CD4-positive, alpha-beta memory T cell (primary cell): ENCODE measurements at regions of chr1 and their contacts with region 1.

Region 1: GRCh38 chr1:39196244-39197215 is 8.0 kb upstream of the MACF1 start:
- DNase-seq: peak; percentile 77 to 89 (median 85)
- H3K4me3 ChIP-seq: peak overlapping the region; percentile 17 to 28
- H3K4me3 Mint-ChIP-seq: peak overlapping the region; percentile 50 to 88 (median 70)
- H3K27ac ChIP-seq: peak overlapping the region; percentile 55
- H3K27ac Mint-ChIP-seq: peak overlapping the region; percentile 91 to 96 (median 93)
- H3K4me1 ChIP-seq: peaks cover 85% of the 10 kb centered on the region
- H3K4me1 Mint-ChIP-seq: peaks cover 60 to 90% (median 73%) of the 10 kb centered on the region in 4 donors
- H3K27me3 ChIP-seq: no peaks in the 10 kb centered on the region
- H3K27me3 Mint-ChIP-seq: no peaks in the 10 kb centered on the region

Region 2: GRCh38 chr1:38990738-38991639 is 205.5 kb before region 1 on chr1 and contains the start of gene AKIRIN1:
- CTCF ChIA-PET with region 1: no interaction called
- POLR2A ChIA-PET with region 1: no interaction called
- intact Hi-C with region 1: loop called (anchors 10 kb)
- DNase-seq: peak; percentile 87 to 95 (median 89)
- H3K4me3 ChIP-seq: peak within 1 kb of the TSS; percentile 52 to 67
- H3K4me3 Mint-ChIP-seq: peak within 1 kb of the TSS; percentile 88 to 94 (median 92)
- H3K27ac ChIP-seq: peak within 1 kb of the TSS; percentile 93
- H3K27ac Mint-ChIP-seq: peak within 1 kb of the TSS; percentile 87 to 93 (median 91)
- H3K4me1 ChIP-seq: peaks cover 47% of the 10 kb centered on the region
- H3K4me1 Mint-ChIP-seq: peaks cover 21 to 52% (median 37%) of the 10 kb centered on the region in 4 donors
- H3K27me3 ChIP-seq: no peaks in the 10 kb centered on the region
- H3K27me3 Mint-ChIP-seq: no peaks in the 10 kb centered on the region
- total RNA-seq, gene AKIRIN1: 79.6 to 84.9 TPM

Region 3: DNA sequence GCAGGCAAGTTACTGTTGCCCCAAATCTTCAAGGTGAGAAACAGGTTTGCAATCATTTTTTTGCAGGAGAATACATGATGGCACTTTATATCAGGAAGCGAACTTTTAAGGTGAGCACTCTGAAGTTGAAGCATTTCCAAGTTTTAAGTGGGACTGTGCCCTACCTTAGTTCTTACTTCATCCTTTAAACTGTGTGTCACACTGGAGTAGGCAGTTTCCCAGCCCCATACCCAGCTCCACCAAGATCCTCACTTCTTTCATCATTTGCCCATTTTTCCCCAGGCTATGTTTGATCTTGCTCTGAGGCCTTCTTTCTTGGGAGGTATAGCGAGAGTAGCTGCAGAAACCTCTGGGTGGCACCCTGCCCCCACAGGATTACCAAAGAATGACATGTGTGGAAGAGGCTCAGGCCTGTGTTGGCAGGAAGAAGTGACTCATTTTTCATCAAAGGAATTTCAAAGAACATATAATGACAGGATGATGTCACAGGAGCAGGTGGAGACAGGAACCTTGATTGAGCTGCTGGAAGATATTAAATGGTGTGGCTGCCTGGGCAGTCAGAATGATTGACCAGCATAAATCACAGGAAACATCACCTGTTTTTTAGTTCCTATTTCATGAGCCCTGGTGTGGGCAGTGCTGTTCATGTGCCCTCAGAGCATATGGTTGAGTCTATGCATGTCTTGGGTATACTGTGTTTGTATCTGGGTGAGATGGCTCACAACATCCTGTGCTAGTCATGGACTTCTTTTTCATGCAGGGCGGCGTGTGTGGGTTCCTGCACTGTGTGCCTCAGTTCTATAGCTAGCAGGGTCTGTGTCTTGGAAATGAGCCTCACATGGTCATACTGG is 12.8 kb before region 1 on chr1:
- CTCF ChIA-PET with region 1: interaction called, 91 read pairs
- POLR2A ChIA-PET with region 1: interaction called, 45 read pairs
- intact Hi-C with region 1: loop called (anchors 1 kb)
- DNase-seq: peak; percentile 83 to 95 (median 87)
- H3K4me3 ChIP-seq: no peak overlapping the region
- H3K4me3 Mint-ChIP-seq: peak overlapping the region in 5 of 8 donors; percentile 8 to 53 (median 35)
- H3K27ac ChIP-seq: peak overlapping the region; percentile 70
- H3K27ac Mint-ChIP-seq: peak overlapping the region; percentile 90 to 98 (median 96)
- H3K4me1 ChIP-seq: peaks cover 34% of the 10 kb centered on the region
- H3K4me1 Mint-ChIP-seq: peaks cover 18 to 44% (median 30%) of the 10 kb centered on the region in 4 donors
- H3K27me3 ChIP-seq: no peaks in the 10 kb centered on the region
- H3K27me3 Mint-ChIP-seq: no peaks in the 10 kb centered on the region

Region 4: GRCh38 chr1:39220891-39221870 is 24.7 kb after region 1 on chr1:
- CTCF ChIA-PET with region 1: interaction called, 186 read pairs
- POLR2A ChIA-PET with region 1: interaction called, 103 read pairs
- intact Hi-C with region 1: no loop called
- DNase-seq: no peak
- H3K4me3 ChIP-seq: no peak overlapping the region
- H3K4me3 Mint-ChIP-seq: peak overlapping the region; percentile 2 to 87 (median 56)
- H3K27ac ChIP-seq: no peak overlapping the region
- H3K27ac Mint-ChIP-seq: peak overlapping the region; percentile 19 to 94 (median 83)
- H3K4me1 ChIP-seq: peaks cover 84% of the 10 kb centered on the region
- H3K4me1 Mint-ChIP-seq: peaks cover 54 to 86% (median 71%) of the 10 kb centered on the region in 4 donors
- H3K27me3 ChIP-seq: no peaks in the 10 kb centered on the region
- H3K27me3 Mint-ChIP-seq: no peaks in the 10 kb centered on the region

Region 5: DNA sequence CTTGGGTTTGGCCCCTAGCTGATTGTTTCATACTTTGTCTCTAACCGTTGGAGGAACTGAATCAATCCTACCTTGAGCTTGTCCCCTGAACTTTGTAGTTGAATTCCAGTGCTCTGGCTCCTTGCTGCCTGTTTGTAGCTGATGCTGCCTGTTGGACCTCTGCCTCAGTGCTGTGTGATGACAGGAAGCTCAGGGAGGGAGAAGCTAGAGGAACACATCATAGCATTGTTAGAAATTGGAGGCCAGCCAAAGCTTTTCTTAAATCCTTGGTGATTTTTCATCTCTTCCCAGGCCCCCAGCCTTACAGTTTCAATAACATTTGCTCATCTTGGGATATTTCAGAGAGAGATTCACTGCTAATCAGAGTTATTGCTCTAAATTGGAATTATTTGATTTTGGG is 41.9 kb after region 1 on chr1:
- CTCF ChIA-PET with region 1: interaction called, 90 read pairs
- POLR2A ChIA-PET with region 1: interaction called, 8 read pairs
- intact Hi-C with region 1: no loop called
- DNase-seq: no peak
- H3K4me3 ChIP-seq: no peak overlapping the region
- H3K4me3 Mint-ChIP-seq: peak overlapping the region in 2 of 8 donors; percentile 12 to 59
- H3K27ac ChIP-seq: peak overlapping the region; percentile 21
- H3K27ac Mint-ChIP-seq: peak overlapping the region; percentile 48 to 89 (median 80)
- H3K4me1 ChIP-seq: peaks cover 34% of the 10 kb centered on the region
- H3K4me1 Mint-ChIP-seq: peaks cover 34 to 70% (median 50%) of the 10 kb centered on the region in 4 donors
- H3K27me3 ChIP-seq: no peaks in the 10 kb centered on the region
- H3K27me3 Mint-ChIP-seq: no peaks in the 10 kb centered on the region

Region 6: GRCh38 chr1:39258146-39258924 is 61.8 kb after region 1 on chr1:
- CTCF ChIA-PET with region 1: interaction called, 820 read pairs
- POLR2A ChIA-PET with region 1: interaction called, 146 read pairs
- intact Hi-C with region 1: loop called (anchors 1 kb)
- DNase-seq: peak; percentile 54 to 71 (median 61)
- H3K4me3 ChIP-seq: no peak overlapping the region
- H3K4me3 Mint-ChIP-seq: peak overlapping the region in 1 of 8 donors; percentile 22
- H3K27ac ChIP-seq: peak overlapping the region; percentile 27
- H3K27ac Mint-ChIP-seq: peak overlapping the region; percentile 41 to 88 (median 81)
- H3K4me1 ChIP-seq: peaks cover 36% of the 10 kb centered on the region
- H3K4me1 Mint-ChIP-seq: peaks cover 20 to 42% (median 30%) of the 10 kb centered on the region in 4 donors
- H3K27me3 ChIP-seq: no peaks in the 10 kb centered on the region
- H3K27me3 Mint-ChIP-seq: no peaks in the 10 kb centered on the region

Region 7: GRCh38 chr1:39408641-39409054 is 212.1 kb after region 1 on chr1:
- CTCF ChIA-PET with region 1: interaction called, 17 read pairs
- POLR2A ChIA-PET with region 1: interaction called, 3 read pairs
- intact Hi-C with region 1: no loop called
- DNase-seq: peak; percentile 73 to 90 (median 77)
- H3K4me3 ChIP-seq: peak overlapping the region in 1 of 2 donors; percentile 59
- H3K4me3 Mint-ChIP-seq: peak overlapping the region in 7 of 8 donors; percentile 54 to 93 (median 92)
- H3K27ac ChIP-seq: peak overlapping the region; percentile 58
- H3K27ac Mint-ChIP-seq: peak overlapping the region in 1 of 7 donors; percentile 66
- H3K4me1 ChIP-seq: peaks cover 63% of the 10 kb centered on the region
- H3K4me1 Mint-ChIP-seq: peaks cover 46 to 72% (median 60%) of the 10 kb centered on the region in 4 donors
- H3K27me3 ChIP-seq: no peaks in the 10 kb centered on the region
- H3K27me3 Mint-ChIP-seq: no peaks in the 10 kb centered on the region